MCF 10A (cell line): ENCODE measurements at regions of chr19 and their contacts with region 1.

Region 1: GRCh38 chr19:6056801-6057650 is 53.3 kb downstream of the RFX2 start:
- DNase-seq: peak; percentile 98
- H3K4me3 Mint-ChIP-seq: peak overlapping the region; percentile 57
- H3K27ac Mint-ChIP-seq: peak overlapping the region; percentile 100
- H3K4me1 Mint-ChIP-seq: peaks cover 40% of the 10 kb centered on the region
- H3K27me3 Mint-ChIP-seq: no peaks in the 10 kb centered on the region
- CTCF ChIP-seq: no peak

Region 2: DNA sequence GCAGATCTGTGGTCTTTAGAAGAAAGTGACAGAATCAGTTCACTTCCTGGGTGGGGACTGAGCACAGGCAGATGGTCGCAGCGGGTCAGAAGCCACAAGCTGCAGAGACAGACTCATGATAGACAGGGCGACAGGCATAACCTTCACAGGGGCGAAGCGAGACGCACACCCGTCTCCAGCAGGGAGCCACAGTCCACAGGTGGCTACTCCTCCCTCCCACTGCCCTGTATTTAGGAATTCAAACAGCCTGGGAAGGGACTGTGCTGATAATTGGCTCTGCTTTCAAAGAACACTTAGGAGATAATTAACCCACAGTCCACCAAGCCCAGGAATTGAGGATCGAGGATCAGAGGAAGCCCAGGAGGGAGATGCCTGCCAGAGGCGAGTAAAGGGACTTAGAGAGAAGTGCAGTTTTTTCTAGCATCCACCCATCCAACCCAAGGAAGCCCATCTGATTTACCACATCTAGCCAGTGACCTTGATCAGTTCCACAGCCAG is 30.1 kb after region 1 on chr19:
- CTCF ChIA-PET with region 1: interaction called, 7 read pairs
- POLR2A ChIA-PET with region 1: interaction called, 79 read pairs
- intact Hi-C with region 1: no loop called
- DNase-seq: no peak
- H3K4me3 Mint-ChIP-seq: no peak overlapping the region
- H3K27ac Mint-ChIP-seq: peak overlapping the region; percentile 91
- H3K4me1 Mint-ChIP-seq: peaks cover 29% of the 10 kb centered on the region
- H3K27me3 Mint-ChIP-seq: no peaks in the 10 kb centered on the region
- CTCF ChIP-seq: no peak

Region 3: GRCh38 chr19:6092329-6093286 is 35.6 kb after region 1 on chr19:
- CTCF ChIA-PET with region 1: interaction called, 7 read pairs
- POLR2A ChIA-PET with region 1: interaction called, 79 read pairs
- intact Hi-C with region 1: no loop called
- DNase-seq: peak; percentile 88
- H3K4me3 Mint-ChIP-seq: peak overlapping the region; percentile 66
- H3K27ac Mint-ChIP-seq: peak overlapping the region; percentile 97
- H3K4me1 Mint-ChIP-seq: peaks cover 32% of the 10 kb centered on the region
- H3K27me3 Mint-ChIP-seq: no peaks in the 10 kb centered on the region
- CTCF ChIP-seq: no peak

Region 4: GRCh38 chr19:6110360-6110977 is 53.4 kb after region 1 on chr19 and contains the start of gene RFX2:
- CTCF ChIA-PET with region 1: interaction called, 4 read pairs
- POLR2A ChIA-PET with region 1: interaction called, 125 read pairs
- intact Hi-C with region 1: loop called (anchors 1 kb)
- DNase-seq: peak; percentile 100
- H3K4me3 Mint-ChIP-seq: peak within 1 kb of the TSS; percentile 88
- H3K27ac Mint-ChIP-seq: peak within 1 kb of the TSS; percentile 95
- H3K4me1 Mint-ChIP-seq: peaks cover 28% of the 10 kb centered on the region
- H3K27me3 Mint-ChIP-seq: no peaks in the 10 kb centered on the region
- CTCF ChIP-seq: no peak
- total RNA-seq, gene RFX2: 9.9 and 10.7 TPM in 2 replicates